BJ (cell line): ENCODE measurements at regions of chr2 and their contacts with region 1.

Region 1: GRCh38 chr2:232562515-232563151 is 12.1 kb downstream of the EIF4E2 start:
- DNase-seq: no peak
- H3K4me3 ChIP-seq: no peak overlapping the region
- H3K27me3 ChIP-seq: no peaks in the 10 kb centered on the region
- CTCF ChIP-seq: no peak

Region 2: DNA sequence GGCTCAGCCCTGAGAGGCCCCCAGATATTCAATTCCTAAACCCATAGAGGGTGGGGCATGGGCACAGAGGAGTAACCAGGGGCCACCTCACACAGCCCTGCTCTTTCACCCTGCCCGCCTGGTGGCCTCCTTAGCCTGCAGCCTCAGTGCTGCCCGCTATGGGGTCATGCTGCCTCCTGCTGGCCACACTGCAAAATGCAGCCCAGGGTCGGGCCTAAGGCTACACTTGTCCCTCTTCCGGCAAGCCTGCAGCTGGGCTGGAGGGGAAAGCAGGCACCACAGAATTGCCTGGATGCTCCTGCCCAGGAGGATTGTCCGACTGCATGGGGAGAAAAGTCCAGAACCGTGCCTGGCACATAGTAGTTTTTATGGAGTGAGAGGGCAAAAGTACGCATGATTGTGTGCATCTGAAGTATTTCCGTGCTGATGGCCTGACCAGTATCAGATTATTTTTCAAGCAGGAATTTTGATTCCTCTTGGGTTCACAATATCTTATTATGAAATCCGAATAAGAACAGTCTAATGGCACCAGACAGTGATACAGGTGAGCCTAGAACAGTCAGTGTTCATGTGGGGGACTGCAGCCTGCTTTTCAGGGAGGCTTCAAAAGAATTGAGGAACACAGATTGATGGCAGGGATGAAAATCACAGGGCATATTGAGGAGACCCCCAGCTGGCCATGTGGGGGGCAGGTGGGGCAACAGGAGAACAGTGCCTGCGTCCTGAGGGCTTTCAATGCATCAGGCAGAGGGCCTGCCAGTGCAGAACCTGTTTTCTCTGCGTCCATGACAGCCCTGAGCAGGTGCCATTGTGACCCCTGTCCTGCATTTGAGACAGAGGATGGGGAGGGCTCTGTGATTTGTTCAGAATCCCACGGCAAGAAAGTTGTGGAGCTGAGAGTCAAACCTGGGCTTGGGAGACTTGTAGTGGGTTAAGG is 235.3 kb before region 1 on chr2:
- CTCF ChIA-PET with region 1: no interaction called
- POLR2A ChIA-PET with region 1: no interaction called
- DNase-seq: peak; percentile 0
- H3K4me3 ChIP-seq: no peak overlapping the region
- H3K27me3 ChIP-seq: no peaks in the 10 kb centered on the region
- CTCF ChIP-seq: peak; percentile 78

Region 3: DNA sequence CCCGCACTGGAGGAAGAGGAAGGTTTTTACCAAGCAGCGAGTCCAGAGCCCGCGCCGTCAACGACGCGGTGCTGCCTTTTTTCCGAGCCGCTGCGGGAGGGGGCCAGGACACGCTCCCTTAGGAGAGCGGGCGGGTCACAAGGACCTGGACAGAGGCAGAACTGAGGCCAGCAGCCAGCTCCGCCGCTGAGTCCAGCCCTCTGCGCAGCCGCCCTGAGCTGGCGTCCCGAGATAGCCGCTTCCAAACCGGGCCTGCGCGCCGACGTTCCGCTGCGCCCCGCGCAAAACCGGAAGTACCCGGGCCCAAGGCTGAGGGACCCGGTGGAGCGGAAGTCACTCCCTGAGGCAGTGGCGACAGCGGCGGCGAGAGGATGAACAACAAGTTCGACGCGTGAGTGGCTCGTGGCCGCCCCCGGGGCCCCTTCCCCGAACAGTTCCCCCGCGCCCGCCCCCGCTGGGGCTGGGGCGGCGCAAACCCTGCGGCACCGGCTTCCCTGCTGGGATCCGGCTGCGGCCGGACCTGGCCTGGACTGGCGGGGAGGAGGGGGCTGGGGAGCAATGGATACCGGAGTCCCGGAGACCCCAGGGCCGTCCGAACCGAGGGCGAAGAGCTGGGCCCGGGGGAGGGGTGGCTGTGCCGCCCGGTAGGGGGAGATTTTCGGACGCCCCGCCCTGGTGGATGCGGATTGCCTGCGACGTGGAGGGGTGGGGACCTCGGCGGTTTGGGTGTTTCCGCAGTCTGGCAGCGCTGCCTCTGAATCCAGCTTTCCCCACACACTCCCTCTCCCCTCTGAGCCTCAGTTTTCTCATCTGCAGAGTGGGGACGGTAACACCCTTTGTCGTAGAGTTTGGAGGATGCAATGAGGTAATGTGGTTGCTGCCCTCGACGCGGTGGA is 12.0 kb before region 1 on chr2 and contains the starts of genes EIF4E2 and TIGD1:
- CTCF ChIA-PET with region 1: no interaction called
- POLR2A ChIA-PET with region 1: interaction called, 12 read pairs
- DNase-seq: peak; percentile 65
- H3K4me3 ChIP-seq: peak within 1 kb of the TSS; percentile 89
- H3K27me3 ChIP-seq: no peaks in the 10 kb centered on the region
- CTCF ChIP-seq: peak; percentile 42
- polyA plus RNA-seq, gene EIF4E2: 23.1 and 36.4 TPM in 2 replicates
- polyA plus RNA-seq, gene TIGD1: 1.7 and 2.5 TPM in 2 replicates

Region 4: DNA sequence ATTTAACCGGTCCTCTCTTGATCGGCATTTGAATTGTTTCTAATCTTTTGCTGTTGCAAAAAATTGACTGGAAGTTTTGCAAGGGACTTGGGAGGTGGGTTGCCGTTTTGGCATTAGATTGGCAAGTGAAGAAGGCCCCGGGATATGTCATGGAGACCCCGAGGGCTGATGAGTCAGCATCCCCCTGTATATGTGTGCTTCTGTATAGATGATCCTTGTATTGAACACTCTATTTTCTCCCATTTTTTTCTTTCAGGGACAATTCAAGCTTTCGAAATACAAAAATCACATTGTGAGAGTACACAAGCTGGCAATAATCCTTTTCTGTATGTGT is 18.0 kb after region 1 on chr2:
- CTCF ChIA-PET with region 1: interaction called, 3 read pairs
- POLR2A ChIA-PET with region 1: interaction called, 17 read pairs
- DNase-seq: no peak
- H3K4me3 ChIP-seq: no peak overlapping the region
- H3K27me3 ChIP-seq: no peaks in the 10 kb centered on the region
- CTCF ChIP-seq: no peak

Region 5: DNA sequence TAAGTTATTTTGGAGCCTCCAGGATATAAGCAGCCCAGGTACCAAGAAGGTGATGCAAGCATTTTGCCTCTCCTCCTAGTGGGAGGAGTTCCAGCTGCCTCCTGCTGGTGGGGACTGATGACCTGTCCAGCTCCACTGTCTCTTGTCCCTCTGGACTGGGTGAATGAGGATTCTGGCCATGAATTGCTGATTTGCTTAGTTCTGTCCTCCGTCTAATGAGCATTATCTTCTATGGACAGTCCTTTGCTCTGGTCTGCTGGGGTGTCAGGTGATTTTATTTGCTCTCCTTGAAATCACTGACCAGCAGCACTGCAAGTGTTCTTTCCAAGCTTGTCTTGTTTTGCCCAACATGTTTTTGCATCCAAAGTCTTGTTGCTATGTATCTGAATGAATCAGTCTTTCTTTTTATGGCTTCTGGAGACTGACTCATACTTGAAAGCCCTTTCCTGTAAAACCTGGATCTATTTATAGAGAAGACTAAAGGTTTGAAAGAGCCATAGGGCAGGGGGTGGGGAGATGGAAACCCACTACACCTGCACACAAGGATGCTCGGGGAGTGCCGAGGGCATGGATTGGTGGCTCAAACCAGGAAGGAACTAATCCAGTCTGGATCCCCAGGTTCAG is 30.3 kb after region 1 on chr2:
- CTCF ChIA-PET with region 1: no interaction called
- POLR2A ChIA-PET with region 1: no interaction called
- DNase-seq: peak; percentile 91
- H3K4me3 ChIP-seq: no peak overlapping the region
- H3K27me3 ChIP-seq: no peaks in the 10 kb centered on the region
- CTCF ChIP-seq: peak; percentile 31